ENCODE measurements at regions of chr19 and their contacts with region 1.

Region 1: DNA sequence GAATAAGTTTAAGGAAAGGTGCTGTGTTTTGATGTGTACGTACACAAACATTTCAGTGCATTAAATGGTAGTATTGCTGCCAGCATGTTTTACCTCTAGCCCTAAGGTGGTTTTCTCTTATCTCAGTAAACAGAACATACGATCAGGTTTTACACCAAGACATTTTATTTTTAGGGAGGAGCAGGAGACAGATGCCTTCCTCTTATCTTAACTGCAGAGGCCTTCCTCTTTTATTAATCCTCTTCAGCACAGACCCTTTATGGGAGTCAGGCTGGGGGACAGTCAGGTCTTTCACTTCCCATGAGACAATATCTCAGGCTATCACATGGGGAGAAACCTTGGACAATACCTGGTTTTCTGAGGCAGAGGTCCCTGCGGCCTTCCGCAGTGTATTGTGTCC is 14.9 kb upstream of the ZNF611 start:
- DNase-seq: no peak
- H3K4me3 ChIP-seq: no peak overlapping the region
- H3K27ac ChIP-seq: no peak overlapping the region
- H3K4me1 ChIP-seq: peaks cover 0 to 4% (median 2%) of the 10 kb centered on the region in 4 donors
- H3K27me3 ChIP-seq: no peaks in the 10 kb centered on the region
- CTCF ChIP-seq: no peak
- EP300 ChIP-seq: no peak
- POLR2A ChIP-seq: no peak

Region 2: DNA sequence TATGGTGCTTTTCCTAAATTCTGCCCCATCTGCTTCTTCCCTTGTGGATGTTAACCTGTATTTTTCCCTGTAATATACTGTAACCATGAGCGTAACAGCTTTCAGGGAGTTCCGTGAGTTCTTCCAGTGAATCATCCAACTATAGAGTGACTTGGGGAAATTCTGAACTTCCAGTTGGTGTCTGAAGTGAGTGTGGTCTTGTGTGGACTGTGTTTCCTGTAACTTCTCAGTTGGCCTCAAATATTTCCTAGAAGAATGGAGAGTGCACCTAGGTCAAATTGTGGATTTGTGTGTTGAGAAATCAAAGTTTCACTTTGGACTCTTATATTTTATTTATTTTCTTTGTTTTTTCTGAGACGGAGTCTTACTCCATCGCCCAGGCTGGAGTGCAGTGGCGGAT is 491.4 kb before region 1 on chr19:
- intact Hi-C with region 1: loop called (anchors 10 kb)
- DNase-seq: no peak
- H3K4me3 ChIP-seq: no peak overlapping the region
- H3K27ac ChIP-seq: no peak overlapping the region
- H3K4me1 ChIP-seq: no peaks in the 10 kb centered on the region
- H3K27me3 ChIP-seq: no peaks in the 10 kb centered on the region
- CTCF ChIP-seq: no peak
- EP300 ChIP-seq: no peak
- POLR2A ChIP-seq: no peak

Region 3: GRCh38 chr19:52473655-52474350 is 276.0 kb before region 1 on chr19:
- intact Hi-C with region 1: no loop called
- DNase-seq: no peak
- H3K4me3 ChIP-seq: no peak overlapping the region
- H3K27ac ChIP-seq: no peak overlapping the region
- H3K4me1 ChIP-seq: no peaks in the 10 kb centered on the region
- H3K27me3 ChIP-seq: no peaks in the 10 kb centered on the region
- CTCF ChIP-seq: no peak
- EP300 ChIP-seq: no peak
- POLR2A ChIP-seq: no peak